ENCODE measurements at regions of chr3 and their contacts with region 1.

Region 1: DNA sequence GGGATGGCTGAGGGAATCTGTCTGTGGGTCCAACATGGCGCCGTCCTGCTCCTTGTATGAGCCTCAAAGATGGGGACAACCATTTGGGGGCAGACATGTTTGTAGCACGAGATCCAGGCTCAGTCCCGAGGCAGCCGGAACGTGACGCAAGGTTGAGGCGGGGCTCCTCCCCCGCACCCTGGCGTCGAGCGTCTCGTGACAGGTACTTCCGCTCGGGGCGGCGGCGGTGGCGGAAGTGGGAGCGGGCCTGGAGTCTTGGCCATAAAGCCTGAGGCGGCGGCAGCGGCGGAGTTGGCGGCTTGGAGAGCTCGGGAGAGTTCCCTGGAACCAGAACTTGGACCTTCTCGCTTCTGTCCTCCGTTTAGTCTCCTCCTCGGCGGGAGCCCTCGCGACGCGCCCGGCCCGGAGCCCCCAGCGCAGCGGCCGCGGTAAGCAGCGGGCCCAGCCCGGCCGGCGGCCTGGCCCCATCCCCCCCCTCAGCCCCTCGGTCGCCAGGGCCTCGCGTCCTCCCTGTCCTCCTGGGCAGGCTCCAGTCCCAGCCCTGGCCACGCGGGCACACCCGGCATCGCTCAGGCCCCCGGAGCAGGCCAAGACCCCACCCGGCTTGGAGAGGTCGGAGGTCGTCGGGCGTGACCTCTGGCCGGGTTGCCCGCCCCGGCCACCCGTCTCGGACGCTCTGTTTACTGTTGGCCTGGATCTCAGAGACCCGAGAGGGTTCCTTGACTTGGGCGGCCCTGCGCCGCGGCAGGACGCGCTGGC is at the start of gene RAB7A:
- DNase-seq: peak; percentile 94 to 99
- H3K4me3 ChIP-seq: peak within 1 kb of the TSS; percentile 89 to 97
- H3K27ac ChIP-seq: peak within 1 kb of the TSS; percentile 94 to 95
- H3K4me1 ChIP-seq: peaks cover 0 to 24% of the 10 kb centered on the region in 2 donors
- H3K27me3 ChIP-seq: no peaks in the 10 kb centered on the region
- CTCF ChIP-seq: no peak
- total RNA-seq, gene RAB7A: 90.3 TPM

Region 2: DNA sequence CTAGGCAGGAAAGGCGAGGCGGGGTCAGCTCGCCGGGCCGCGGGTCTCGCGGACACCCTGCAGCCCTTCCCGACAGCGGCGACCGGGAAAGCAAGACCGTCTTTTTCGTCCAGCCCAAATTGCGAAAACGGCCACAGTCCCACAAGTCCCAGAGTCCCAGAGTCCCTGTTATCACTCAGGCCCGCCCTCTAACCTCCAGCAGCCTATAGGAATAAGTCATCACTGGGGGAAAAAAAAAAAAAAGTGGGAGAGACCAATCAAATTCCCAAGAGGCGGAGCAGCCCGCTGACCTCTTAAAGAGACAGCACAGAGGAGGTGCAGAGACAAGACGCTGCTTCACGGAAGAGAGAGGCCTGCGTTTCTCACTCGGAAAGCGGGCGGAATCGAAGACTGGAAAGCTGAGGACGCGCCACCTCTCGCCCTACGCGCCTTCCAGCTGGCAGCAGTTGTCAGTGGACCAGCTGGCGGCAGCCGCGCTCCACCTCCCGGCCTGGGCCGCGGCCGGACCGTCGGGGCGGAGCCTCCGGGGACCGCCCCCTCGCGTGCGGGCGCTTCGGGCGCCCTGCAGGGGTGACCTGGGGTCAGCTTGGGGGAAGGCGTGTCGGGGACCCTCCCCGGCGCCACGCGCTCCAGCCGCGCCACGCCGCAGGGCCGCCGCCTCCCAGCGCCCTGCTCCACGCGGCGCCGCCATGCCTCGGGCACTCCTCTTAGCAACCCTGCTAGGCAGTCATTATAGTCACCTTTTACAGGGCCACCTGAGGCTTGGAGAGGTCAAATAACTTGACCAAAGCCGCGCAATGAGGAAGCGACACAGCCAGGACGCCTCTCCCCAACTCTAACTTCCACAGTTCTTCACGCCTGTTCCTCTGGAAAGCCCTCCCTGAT is 1135.3 kb before region 1 on chr3 and contains the start of gene TPRA1:
- intact Hi-C with region 1: loop called (anchors 10 kb)
- DNase-seq: peak; percentile 82 to 96
- H3K4me3 ChIP-seq: peak within 1 kb of the TSS; percentile 83 to 89
- H3K27ac ChIP-seq: peak within 1 kb of the TSS; percentile 89 to 90
- H3K4me1 ChIP-seq: peaks cover 3 to 18% of the 10 kb centered on the region in 2 donors
- H3K27me3 ChIP-seq: no peaks in the 10 kb centered on the region
- CTCF ChIP-seq: peak in 1 of 3 experiments; percentile 30
- total RNA-seq, gene TPRA1: 87.1 TPM

Region 3: DNA sequence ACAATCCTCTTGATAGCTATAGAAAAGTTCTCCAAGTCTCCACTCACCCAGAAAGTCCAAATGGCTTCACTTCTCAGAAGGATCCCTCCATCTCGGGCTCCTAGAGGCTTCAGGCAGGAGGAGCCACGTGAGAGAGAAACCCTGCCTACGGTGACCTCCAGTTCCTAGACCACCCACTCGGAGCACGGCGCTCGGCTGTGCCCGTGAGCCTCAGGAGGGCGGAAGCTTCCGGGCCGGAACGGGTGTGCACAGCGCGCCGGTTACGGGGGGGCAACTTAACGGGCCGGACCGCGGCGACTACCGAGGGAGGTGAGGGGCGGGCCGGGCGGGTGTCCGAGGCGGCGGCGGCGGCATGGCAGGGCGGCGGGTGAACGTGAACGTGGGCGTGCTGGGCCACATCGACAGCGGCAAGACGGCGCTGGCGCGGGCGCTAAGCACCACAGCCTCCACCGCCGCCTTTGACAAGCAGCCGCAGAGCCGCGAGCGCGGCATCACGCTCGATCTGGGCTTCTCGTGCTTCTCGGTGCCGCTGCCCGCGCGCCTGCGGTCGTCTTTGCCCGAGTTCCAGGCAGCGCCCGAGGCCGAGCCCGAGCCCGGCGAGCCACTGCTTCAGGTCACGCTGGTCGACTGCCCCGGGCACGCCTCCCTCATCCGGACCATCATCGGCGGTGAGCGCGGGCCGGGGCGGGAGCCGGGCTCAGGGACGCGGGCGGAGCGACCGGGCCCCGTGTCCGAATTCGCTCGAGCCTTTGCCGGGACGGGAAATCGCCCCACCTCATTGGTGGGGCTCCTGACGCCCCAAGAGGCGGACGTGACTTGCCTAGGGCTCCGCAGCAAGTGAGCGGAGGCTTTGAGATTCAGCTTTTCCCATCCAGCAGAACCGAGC is 572.7 kb before region 1 on chr3 and contains the start of gene EEFSEC:
- intact Hi-C with region 1: loop called (anchors 2 kb)
- DNase-seq: peak; percentile 27 to 90
- H3K4me3 ChIP-seq: peak within 1 kb of the TSS; percentile 81 to 84
- H3K27ac ChIP-seq: peak within 1 kb of the TSS; percentile 82 to 85
- H3K4me1 ChIP-seq: peaks cover 6 to 10% of the 10 kb centered on the region in 2 donors
- H3K27me3 ChIP-seq: no peaks in the 10 kb centered on the region
- CTCF ChIP-seq: no peak
- total RNA-seq, gene EEFSEC: 16.2 TPM

Region 4: DNA sequence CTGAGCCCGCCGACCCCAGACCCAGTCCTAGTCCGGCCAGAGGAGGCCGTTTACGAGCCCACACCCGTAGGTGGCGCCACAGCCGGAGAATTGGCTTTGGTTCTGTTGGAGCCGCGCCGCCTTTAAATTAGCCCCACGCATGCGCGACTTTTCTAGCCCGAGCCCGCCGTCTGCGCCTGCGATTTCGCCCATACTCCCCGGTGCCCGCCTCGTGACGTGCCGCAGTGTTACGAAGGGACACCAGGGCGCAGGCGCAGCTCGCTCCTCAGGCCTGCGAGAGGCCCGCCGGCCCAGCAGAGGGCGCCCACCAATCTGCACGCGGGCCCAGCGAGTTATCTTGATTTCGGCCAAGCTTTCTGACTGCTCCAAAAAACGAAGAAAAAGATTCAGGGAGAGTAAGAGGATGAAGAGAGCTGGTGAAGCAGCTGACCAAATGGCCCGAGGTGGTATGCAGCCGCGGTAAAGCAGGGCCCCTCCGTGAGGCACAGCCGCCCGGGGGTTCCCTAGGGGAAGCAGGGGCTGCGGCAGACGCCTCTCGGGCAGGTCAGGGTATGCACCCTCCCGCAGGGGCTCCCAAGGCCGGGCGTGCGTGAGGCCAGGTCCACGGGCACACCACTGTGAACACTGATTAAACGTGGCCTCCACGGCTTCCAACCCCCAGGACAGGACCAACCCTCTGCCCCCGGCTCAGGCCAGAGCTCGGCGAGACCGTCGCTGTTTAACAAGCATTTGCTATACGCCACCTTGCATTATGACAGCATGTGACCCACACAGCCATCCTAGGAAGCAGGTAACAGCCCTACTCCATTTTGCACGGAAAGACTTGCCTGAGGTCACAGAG is 108.3 kb before region 1 on chr3:
- intact Hi-C with region 1: loop called (anchors 2 kb)
- DNase-seq: peak; percentile 84 to 99
- H3K4me3 ChIP-seq: peak overlapping the region; percentile 83 to 86
- H3K27ac ChIP-seq: peak overlapping the region; percentile 73 to 80
- H3K4me1 ChIP-seq: peaks cover 6 to 16% of the 10 kb centered on the region in 2 donors
- H3K27me3 ChIP-seq: no peaks in the 10 kb centered on the region
- CTCF ChIP-seq: peak; percentile 94 to 95 (median 94)

Region 5: GRCh38 chr3:128680602-128681368 is 45.3 kb before region 1 on chr3:
- intact Hi-C with region 1: loop called (anchors 1 kb)
- DNase-seq: peak; percentile 95 to 100
- H3K4me3 ChIP-seq: peak overlapping the region; percentile 65 to 90
- H3K27ac ChIP-seq: peak overlapping the region; percentile 94 to 97
- H3K4me1 ChIP-seq: no peaks in the 10 kb centered on the region
- H3K27me3 ChIP-seq: no peaks in the 10 kb centered on the region
- CTCF ChIP-seq: peak; percentile 95 to 99 (median 97)

Region 6: DNA sequence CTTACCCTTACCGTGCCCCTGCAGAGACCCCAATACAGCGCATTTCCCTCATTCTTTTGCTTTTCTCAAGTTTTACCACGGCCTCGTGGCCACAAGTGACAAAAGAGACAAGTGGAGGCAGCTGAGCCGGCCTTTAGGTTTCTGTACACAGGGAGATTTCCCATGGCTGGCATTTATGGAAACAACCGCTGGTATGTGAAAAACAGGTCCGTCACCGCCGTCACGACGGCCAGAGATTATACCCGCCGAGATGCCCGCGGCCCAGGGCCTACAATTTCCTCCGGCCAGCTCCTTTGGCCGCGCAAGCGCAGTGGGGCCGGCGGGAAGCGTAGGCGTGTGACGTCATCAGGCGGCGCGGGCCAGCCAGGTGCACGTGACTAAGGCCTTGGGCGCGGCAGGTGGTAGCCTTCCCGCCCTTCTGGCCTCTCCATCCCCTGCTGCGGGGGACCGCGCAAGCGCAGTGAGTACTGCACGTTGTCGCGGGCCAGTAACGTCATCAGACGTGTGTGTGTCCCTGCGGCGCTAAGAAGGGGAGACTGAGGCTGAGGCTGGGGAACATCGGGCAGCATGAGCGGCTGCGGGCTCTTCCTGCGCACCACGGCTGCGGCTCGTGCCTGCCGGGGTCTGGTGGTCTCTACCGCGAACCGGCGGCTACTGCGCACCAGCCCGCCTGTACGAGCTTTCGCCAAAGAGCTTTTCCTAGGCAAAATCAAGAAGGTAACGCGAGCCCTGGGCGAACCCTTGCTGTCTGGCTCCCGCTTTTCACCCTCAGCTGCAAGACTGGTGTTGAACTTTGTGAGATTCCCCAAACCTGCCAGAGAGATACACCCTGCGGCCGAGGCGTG is 153.2 kb after region 1 on chr3 and contains the start of gene ACAD9:
- intact Hi-C with region 1: loop called (anchors 2 kb)
- DNase-seq: peak; percentile 94 to 98
- H3K4me3 ChIP-seq: peak within 1 kb of the TSS; percentile 71 to 86
- H3K27ac ChIP-seq: peak within 1 kb of the TSS; percentile 91 to 95
- H3K4me1 ChIP-seq: peaks cover 17% of the 10 kb centered on the region in 2 donors
- H3K27me3 ChIP-seq: no peaks in the 10 kb centered on the region
- CTCF ChIP-seq: no peak
- total RNA-seq, gene ACAD9: 23.4 TPM